Activated CD4-positive, alpha-beta T cell treated with anti-CD3 and anti-CD28 coated beads for 36 hours (primary cell): ENCODE measurements at regions of chr6 and their contacts with region 1.

Region 1: GRCh38 chr6:41920921-41921711 is at the starts of genes BYSL and MED20:
- DNase-seq: peak; percentile 96
- ATAC-seq: peak; percentile 83
- H3K4me3 Mint-ChIP-seq: peak within 1 kb of the TSS; percentile 99
- H3K27ac Mint-ChIP-seq: peak within 1 kb of the TSS; percentile 98
- H3K4me1 Mint-ChIP-seq: peaks cover 49% of the 10 kb centered on the region
- H3K27me3 Mint-ChIP-seq: no peaks in the 10 kb centered on the region
- total RNA-seq, gene BYSL: 51.6 to 56.0 TPM
- total RNA-seq, gene MED20: 19.4 to 21.6 TPM

Region 2: DNA sequence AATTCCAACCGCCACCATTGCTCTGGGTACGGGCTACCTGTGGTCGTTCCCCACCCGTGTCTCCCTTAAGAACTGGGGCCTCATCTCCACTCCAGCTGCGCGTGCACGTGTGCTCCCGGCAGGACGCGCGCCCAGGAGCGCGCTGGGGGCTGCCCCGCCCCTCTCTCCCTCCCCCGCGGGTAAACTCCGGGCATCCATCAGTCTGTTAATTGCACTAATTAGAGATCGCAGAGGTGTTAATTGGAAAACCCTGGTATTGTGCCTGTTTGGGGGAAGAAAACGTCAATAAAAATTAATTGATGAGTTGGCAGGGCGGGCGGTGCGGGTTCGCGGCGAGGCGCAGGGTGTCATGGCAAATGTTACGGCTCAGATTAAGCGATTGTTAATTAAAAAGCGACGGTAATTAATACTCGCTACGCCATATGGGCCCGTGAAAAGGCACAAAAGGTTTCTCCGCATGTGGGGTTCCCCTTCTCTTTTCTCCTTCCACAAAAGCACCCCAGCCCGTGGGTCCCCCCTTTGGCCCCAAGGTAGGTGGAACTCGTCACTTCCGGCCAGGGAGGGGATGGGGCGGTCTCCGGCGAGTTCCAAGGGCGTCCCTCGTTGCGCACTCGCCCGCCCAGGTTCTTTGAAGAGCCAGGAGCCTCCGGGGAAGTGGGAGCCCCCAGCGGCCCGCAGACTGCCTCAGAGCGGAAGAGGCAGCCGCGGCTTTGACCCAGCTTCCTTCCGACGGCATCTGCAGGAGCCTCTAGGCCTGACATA is 360.5 kb before region 1 on chr6:
- CTCF ChIA-PET with region 1: no interaction called
- POLR2A ChIA-PET with region 1: no interaction called
- intact Hi-C with region 1: no loop called
- DNase-seq: peak; percentile 90
- ATAC-seq: peak; percentile 93
- H3K4me3 Mint-ChIP-seq: peak overlapping the region; percentile 79
- H3K27ac Mint-ChIP-seq: peak overlapping the region; percentile 82
- H3K4me1 Mint-ChIP-seq: peaks cover 18% of the 10 kb centered on the region
- H3K27me3 Mint-ChIP-seq: no peaks in the 10 kb centered on the region

Region 3: GRCh38 chr6:41670703-41671360 is 250.3 kb before region 1 on chr6:
- CTCF ChIA-PET with region 1: no interaction called
- POLR2A ChIA-PET with region 1: no interaction called
- intact Hi-C with region 1: no loop called
- DNase-seq: no peak
- ATAC-seq: no peak
- H3K4me3 Mint-ChIP-seq: no peak overlapping the region
- H3K27ac Mint-ChIP-seq: no peak overlapping the region
- H3K4me1 Mint-ChIP-seq: no peaks in the 10 kb centered on the region
- H3K27me3 Mint-ChIP-seq: peaks cover 11% of the 10 kb centered on the region

Region 4: GRCh38 chr6:41787219-41787917 is 133.7 kb before region 1 on chr6 and contains the start of gene TOMM6:
- CTCF ChIA-PET with region 1: interaction called, 24 read pairs
- POLR2A ChIA-PET with region 1: interaction called, 15 read pairs
- intact Hi-C with region 1: loop called (anchors 1 kb)
- DNase-seq: peak; percentile 98
- ATAC-seq: peak; percentile 86
- H3K4me3 Mint-ChIP-seq: peak within 1 kb of the TSS; percentile 96
- H3K27ac Mint-ChIP-seq: peak within 1 kb of the TSS; percentile 98
- H3K4me1 Mint-ChIP-seq: peaks cover 19% of the 10 kb centered on the region
- H3K27me3 Mint-ChIP-seq: peaks cover 2% of the 10 kb centered on the region
- total RNA-seq, gene TOMM6: 282 to 345 TPM

Region 5: GRCh38 chr6:41895300-41896233 is 25.5 kb before region 1 on chr6 and contains the start of gene USP49:
- CTCF ChIA-PET with region 1: interaction called, 23 read pairs
- POLR2A ChIA-PET with region 1: no interaction called
- intact Hi-C with region 1: loop called (anchors 1 kb)
- DNase-seq: peak; percentile 96
- ATAC-seq: peak; percentile 92
- H3K4me3 Mint-ChIP-seq: no peak within 1 kb of the TSS
- H3K27ac Mint-ChIP-seq: peak within 1 kb of the TSS; percentile 95
- H3K4me1 Mint-ChIP-seq: peaks cover 13% of the 10 kb centered on the region
- H3K27me3 Mint-ChIP-seq: no peaks in the 10 kb centered on the region
- total RNA-seq, gene USP49: 5.6 to 7.3 TPM

Region 6: DNA sequence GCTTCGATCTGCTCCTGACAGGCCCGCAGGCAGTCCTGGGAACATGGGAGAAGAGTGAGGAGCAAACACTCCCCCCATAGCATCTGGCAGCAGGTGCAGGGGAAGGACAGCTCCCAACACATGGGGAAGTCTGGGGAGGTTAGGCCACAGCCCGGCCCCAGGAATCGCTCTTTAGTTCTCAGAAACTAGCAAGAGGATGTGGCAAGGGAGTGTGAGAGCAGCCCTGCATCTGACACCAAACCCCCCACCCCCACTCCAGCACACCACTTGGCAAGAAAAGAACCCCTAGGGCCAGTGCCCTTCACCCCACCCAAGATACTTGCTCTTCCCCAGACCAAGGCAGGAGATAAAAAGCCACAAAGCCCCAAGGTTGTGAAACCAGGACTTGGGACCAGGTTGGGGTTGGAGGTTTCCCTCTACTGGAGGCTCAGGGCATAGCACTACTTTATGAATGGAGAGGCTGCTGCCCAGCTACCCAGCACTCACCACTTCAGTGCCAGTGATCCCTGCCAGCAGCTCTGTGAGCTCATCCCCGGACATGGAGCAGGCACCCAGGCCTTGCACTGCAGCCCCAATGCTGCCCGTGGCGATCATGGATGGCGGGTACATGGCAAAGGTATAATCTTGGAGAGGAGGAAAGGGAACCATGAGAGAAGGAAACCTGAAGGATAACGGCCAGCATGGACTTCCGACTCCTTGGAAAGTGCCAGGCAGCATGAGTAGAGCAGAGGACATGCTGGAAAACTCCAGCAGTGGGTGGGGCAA is 15.1 kb after region 1 on chr6:
- CTCF ChIA-PET with region 1: interaction called, 66 read pairs
- POLR2A ChIA-PET with region 1: no interaction called
- intact Hi-C with region 1: loop called (anchors 1 kb)
- DNase-seq: peak; percentile 83
- ATAC-seq: peak; percentile 54
- H3K4me3 Mint-ChIP-seq: peak overlapping the region; percentile 100
- H3K27ac Mint-ChIP-seq: peak overlapping the region; percentile 96
- H3K4me1 Mint-ChIP-seq: peaks cover 55% of the 10 kb centered on the region
- H3K27me3 Mint-ChIP-seq: no peaks in the 10 kb centered on the region

Region 7: GRCh38 chr6:42038811-42039408 is 117.8 kb after region 1 on chr6:
- CTCF ChIA-PET with region 1: interaction called, 189 read pairs
- POLR2A ChIA-PET with region 1: interaction called, 4 read pairs
- intact Hi-C with region 1: loop called (anchors 1 kb)
- DNase-seq: no peak
- ATAC-seq: no peak
- H3K4me3 Mint-ChIP-seq: peak overlapping the region; percentile 88
- H3K27ac Mint-ChIP-seq: peak overlapping the region; percentile 100
- H3K4me1 Mint-ChIP-seq: peaks cover 78% of the 10 kb centered on the region
- H3K27me3 Mint-ChIP-seq: no peaks in the 10 kb centered on the region

Region 8: DNA sequence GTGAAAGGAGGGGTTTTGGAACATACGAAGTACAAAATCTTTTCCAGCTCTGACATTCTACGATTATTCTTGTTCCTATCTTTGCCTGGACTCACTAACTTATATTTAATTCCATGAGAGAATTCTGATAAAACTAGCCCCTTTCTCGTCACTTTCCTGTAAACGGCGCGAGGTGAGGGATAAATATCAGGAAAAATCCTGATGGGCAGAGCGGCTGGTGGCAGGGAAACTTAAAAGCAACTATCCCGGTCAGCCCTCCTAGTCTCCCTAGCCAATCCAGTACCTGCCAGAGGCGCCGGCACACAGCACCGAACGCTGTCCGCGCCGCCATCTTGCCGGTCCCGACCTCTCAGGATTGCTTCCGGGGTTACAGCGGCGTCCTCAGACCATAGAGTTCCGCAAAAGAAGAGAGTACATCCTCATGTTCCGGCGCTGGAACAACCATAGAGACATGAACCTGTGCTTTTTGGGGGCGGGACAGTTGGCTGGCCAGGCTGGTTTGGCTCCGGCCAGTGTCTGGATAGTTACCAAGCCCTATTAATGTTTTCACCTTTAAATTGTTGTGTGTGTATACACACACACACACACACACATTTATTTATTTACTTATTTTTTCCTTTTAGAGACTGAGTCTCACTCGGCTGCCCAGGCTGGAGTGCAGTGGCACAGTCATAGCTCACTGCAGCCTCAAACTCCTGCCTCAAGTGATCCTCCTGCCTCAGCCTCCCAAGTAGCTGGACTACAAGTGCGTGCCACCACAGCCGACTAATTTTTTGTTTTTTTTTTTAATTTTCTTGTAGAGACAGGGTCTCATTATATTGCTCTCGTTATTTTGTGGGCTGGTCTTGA is 296.6 kb after region 1 on chr6 and contains the start of gene MRPS10:
- CTCF ChIA-PET with region 1: interaction called, 3 read pairs
- POLR2A ChIA-PET with region 1: no interaction called
- intact Hi-C with region 1: loop called (anchors 1 kb)
- DNase-seq: peak; percentile 95
- ATAC-seq: peak; percentile 99
- H3K4me3 Mint-ChIP-seq: peak within 1 kb of the TSS; percentile 100
- H3K27ac Mint-ChIP-seq: peak within 1 kb of the TSS; percentile 95
- H3K4me1 Mint-ChIP-seq: peaks cover 32% of the 10 kb centered on the region
- H3K27me3 Mint-ChIP-seq: no peaks in the 10 kb centered on the region
- total RNA-seq, gene MRPS10: 35.2 to 36.2 TPM